Endothelial cell of umbilical vein (primary cell): ENCODE measurements at regions of chr1 and their contacts with region 1.

Region 1: GRCh38 chr1:198157241-198157846 is 546 bp downstream of the NEK7 start:
- DNase-seq: peak; percentile 93
- H3K4me3 ChIP-seq: peak overlapping the region; percentile 82 to 95 (median 91)
- H3K27ac ChIP-seq: peak overlapping the region; percentile 45
- H3K4me1 ChIP-seq: peaks cover 59% of the 10 kb centered on the region
- H3K27me3 ChIP-seq: no peaks in the 10 kb centered on the region
- CTCF ChIP-seq: no peak
- POLR2A ChIP-seq: no peak

Region 2: GRCh38 chr1:197614916-197615692 is 542.2 kb before region 1 on chr1:
- CTCF ChIA-PET with region 1: interaction called, 3 read pairs
- POLR2A ChIA-PET with region 1: no interaction called
- dilution Hi-C with region 1: no loop called
- intact Hi-C with region 1: loop called (anchors 5 kb)
- DNase-seq: peak; percentile 55
- H3K4me3 ChIP-seq: no peak overlapping the region
- H3K27ac ChIP-seq: no peak overlapping the region
- H3K4me1 ChIP-seq: no peaks in the 10 kb centered on the region
- H3K27me3 ChIP-seq: no peaks in the 10 kb centered on the region
- CTCF ChIP-seq: peak; percentile 51 to 57
- POLR2A ChIP-seq: no peak

Region 3: GRCh38 chr1:197915862-197916499 is 241.4 kb before region 1 on chr1:
- CTCF ChIA-PET with region 1: interaction called, 3 read pairs
- POLR2A ChIA-PET with region 1: no interaction called
- dilution Hi-C with region 1: no loop called
- intact Hi-C with region 1: loop called (anchors 5 kb)
- DNase-seq: peak; percentile 55
- H3K4me3 ChIP-seq: peak overlapping the region in 2 of 3 experiments; percentile 13 to 15
- H3K27ac ChIP-seq: no peak overlapping the region
- H3K4me1 ChIP-seq: peaks cover 44% of the 10 kb centered on the region
- H3K27me3 ChIP-seq: peaks cover 95 to 99% of the 10 kb centered on the region in 2 experiments
- CTCF ChIP-seq: peak; percentile 54 to 78
- POLR2A ChIP-seq: no peak

Region 4: DNA sequence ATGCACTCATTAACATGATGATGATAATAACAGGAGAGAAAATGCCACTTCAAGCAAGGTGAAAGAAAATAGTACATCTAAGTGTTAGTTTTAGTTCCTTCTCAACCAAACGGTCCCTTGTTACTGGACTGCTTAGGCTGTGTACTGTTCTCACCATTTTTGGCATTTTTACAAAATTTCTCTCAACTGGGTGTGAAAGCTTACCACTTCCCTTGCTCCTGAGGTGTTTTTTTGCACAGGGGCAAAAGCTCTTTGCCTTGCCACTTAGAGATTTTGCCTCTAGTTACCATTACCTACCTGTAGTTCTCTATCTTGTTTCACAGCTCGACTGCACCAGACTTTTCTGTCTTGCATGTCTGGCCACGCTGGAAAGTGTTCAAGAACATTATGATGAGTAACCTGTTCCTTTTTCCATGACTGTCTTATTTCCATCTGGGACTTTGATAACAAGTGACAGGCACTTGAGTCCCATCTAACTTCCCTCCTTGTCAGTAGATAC is 10.1 kb after region 1 on chr1:
- CTCF ChIA-PET with region 1: interaction called, 5 read pairs
- POLR2A ChIA-PET with region 1: no interaction called
- dilution Hi-C with region 1: no loop called
- intact Hi-C with region 1: loop called (anchors 1 kb)
- DNase-seq: peak; percentile 70
- H3K4me3 ChIP-seq: no peak overlapping the region
- H3K27ac ChIP-seq: no peak overlapping the region
- H3K4me1 ChIP-seq: peaks cover 41% of the 10 kb centered on the region
- H3K27me3 ChIP-seq: no peaks in the 10 kb centered on the region
- CTCF ChIP-seq: no peak
- POLR2A ChIP-seq: no peak

Region 5: DNA sequence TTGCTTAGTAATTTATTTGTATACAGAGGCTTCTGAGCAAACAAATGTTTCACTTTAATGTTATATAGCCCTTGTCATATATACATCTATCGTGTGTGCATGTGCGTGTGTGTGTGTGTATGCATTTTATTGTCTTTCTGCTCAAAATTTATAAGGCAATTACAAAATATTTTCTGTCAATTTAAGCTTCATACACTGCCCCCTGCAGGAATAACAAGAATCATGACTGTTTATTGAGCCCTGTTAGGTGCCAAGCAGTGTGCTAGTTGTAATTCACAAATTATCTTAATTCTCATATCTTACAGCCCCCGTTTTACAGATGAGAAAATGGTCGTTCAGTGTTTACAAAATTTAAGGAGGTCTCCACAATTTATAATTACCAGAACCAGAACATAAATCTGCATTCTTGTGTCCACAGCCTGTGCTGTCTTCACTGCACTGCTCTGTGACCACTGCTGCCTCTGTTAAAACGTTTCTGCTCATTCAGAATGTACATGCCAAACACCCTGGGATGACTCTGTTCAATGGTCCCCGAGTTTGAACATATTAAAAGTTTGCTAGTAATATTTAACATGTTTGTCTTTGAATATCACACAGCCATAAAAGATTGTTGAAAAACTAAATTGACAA is 201.8 kb after region 1 on chr1:
- CTCF ChIA-PET with region 1: interaction called, 10 read pairs
- POLR2A ChIA-PET with region 1: no interaction called
- dilution Hi-C with region 1: no loop called
- intact Hi-C with region 1: loop called (anchors 1 kb)
- DNase-seq: peak; percentile 32
- H3K4me3 ChIP-seq: no peak overlapping the region
- H3K27ac ChIP-seq: no peak overlapping the region
- H3K4me1 ChIP-seq: no peaks in the 10 kb centered on the region
- H3K27me3 ChIP-seq: no peaks in the 10 kb centered on the region
- CTCF ChIP-seq: peak; percentile 27 to 36
- POLR2A ChIP-seq: no peak

Region 6: GRCh38 chr1:198681831-198682759 is 524.8 kb after region 1 on chr1:
- CTCF ChIA-PET with region 1: interaction called, 23 read pairs
- POLR2A ChIA-PET with region 1: no interaction called
- dilution Hi-C with region 1: no loop called
- intact Hi-C with region 1: loop called (anchors 2 kb)
- DNase-seq: peak; percentile 76
- H3K4me3 ChIP-seq: peak overlapping the region in 1 of 3 experiments; percentile 17
- H3K27ac ChIP-seq: peak overlapping the region; percentile 14
- H3K4me1 ChIP-seq: peaks cover 9% of the 10 kb centered on the region
- H3K27me3 ChIP-seq: no peaks in the 10 kb centered on the region
- CTCF ChIP-seq: no peak
- POLR2A ChIP-seq: no peak